ENCODE measurements at regions of chr6 and their contacts with region 1.

Region 1: GRCh38 chr6:33391278-33391921 is at the start of gene KIFC1:
- DNase-seq: peak; percentile 99
- H3K4me3 ChIP-seq: peak within 1 kb of the TSS; percentile 97
- CTCF ChIP-seq: peak; percentile 98

Region 2: GRCh38 chr6:33317669-33318425 is 73.6 kb before region 1 on chr6 and contains the start of gene ZBTB22:
- CTCF ChIA-PET with region 1: interaction called, 14 read pairs
- POLR2A ChIA-PET with region 1: no interaction called
- DNase-seq: peak; percentile 95
- H3K4me3 ChIP-seq: peak within 1 kb of the TSS; percentile 67
- CTCF ChIP-seq: no peak

Region 3: DNA sequence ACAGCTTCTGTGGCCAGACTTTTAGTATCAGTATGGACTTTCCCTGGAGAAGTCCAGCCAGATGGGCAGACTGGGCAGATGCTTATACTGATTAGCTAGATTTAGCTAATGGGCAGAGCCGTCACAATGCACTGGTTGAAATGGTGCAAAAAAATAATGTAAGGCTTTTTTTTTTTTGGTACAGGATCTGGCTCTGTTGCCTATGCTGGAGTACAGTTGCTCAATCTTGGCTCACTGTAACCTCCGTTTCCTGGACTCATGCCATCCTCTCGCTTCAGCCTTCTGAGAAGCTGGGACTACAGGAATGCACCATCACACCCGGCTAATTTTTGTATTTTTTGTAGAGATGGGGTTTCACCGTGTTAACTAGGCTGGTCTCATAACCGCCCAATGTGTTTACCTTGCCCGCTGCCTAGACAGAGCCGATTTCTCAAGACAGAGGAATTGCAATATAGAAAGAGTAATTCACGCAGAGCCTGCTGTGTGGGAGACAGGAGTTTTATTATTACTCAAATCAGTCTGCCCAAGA is 16.2 kb before region 1 on chr6:
- CTCF ChIA-PET with region 1: interaction called, 27 read pairs
- POLR2A ChIA-PET with region 1: no interaction called
- DNase-seq: peak; percentile 51
- H3K4me3 ChIP-seq: no peak overlapping the region
- CTCF ChIP-seq: no peak

Region 4: DNA sequence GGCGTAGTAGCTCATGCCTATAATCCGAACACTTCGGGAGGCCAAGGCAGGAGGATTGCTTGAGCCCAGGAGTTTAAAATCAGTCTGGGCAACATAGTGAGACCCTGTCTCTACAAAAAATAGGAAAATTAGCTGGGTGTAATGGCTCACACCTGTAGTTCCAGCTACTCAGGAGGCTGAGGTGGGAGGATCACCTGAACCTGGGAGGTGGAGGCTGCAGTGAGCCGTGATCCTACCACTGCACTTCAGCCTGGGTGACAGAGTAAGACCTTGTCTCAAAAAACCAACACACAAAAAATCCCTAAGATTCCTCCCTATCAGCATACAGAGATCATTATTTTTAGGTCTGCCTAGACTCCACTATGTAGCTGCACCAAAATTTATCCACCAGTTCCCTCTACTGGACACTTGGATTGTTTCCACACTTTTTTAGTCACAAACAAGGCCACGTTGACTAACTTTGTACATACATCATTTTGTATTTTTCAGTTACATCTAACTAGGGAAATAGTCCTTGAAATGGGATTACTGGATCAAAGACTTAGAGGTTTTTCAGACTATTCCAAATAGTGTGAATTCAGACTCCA is 15.8 kb after region 1 on chr6:
- CTCF ChIA-PET with region 1: interaction called, 44 read pairs
- POLR2A ChIA-PET with region 1: no interaction called
- DNase-seq: no peak
- H3K4me3 ChIP-seq: no peak overlapping the region
- CTCF ChIP-seq: no peak

Region 5: GRCh38 chr6:33417903-33418689 is 26.7 kb after region 1 on chr6 and contains the start of gene CUTA:
- CTCF ChIA-PET with region 1: interaction called, 11 read pairs
- POLR2A ChIA-PET with region 1: no interaction called
- DNase-seq: peak; percentile 98
- H3K4me3 ChIP-seq: peak within 1 kb of the TSS; percentile 91
- CTCF ChIP-seq: no peak

Region 6: DNA sequence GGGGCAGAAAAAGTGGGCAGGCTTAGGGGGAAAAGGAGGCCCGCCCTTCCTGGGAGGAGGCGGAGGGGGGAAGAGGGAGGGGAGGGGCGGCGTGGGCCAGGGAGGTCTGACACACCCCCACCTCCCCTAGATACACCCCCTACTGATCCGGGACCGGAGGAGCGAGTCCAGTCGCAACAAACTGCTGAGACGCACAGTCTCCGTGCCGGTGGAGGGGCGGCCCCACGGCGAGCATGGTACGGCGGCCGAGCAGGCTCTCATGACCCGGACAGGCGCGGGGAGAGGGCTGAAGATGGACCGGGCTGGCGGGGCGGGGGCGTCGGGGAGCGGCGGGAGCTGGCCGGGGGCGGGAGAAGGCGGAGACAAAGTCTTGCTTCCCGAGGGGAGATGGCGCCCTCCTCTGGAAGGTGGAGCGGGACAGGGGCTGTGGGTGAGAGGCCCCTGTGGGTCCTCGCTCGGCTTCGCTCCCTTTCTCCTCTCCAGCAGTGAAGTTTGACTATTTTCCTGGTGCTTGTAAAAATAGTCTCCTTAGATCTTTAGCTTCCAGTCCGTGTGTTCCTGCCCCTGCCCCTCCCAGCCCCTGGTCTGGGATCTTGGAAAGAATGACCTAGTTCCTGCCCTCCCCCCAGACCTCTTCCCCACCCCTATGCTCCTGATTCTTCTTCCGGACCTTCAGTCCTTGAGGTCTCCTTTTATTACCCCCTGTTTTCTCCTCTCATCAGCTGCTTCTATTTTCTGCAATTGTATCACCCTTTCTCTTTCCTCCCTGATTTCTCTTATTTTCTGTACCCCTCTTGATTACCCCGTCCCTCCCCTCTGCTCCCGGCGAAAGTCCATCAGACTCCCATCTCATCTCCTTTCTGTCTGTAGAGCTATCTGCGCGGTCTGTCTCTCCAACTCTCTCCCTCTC is 34.5 kb after region 1 on chr6:
- CTCF ChIA-PET with region 1: interaction called, 48 read pairs
- POLR2A ChIA-PET with region 1: no interaction called
- DNase-seq: no peak
- H3K4me3 ChIP-seq: peak overlapping the region; percentile 66
- CTCF ChIP-seq: peak; percentile 70

Region 7: GRCh38 chr6:33430991-33431879 is 39.8 kb after region 1 on chr6:
- CTCF ChIA-PET with region 1: interaction called, 48 read pairs
- POLR2A ChIA-PET with region 1: interaction called, 6 read pairs
- DNase-seq: no peak
- H3K4me3 ChIP-seq: no peak overlapping the region
- CTCF ChIP-seq: no peak

Region 8: DNA sequence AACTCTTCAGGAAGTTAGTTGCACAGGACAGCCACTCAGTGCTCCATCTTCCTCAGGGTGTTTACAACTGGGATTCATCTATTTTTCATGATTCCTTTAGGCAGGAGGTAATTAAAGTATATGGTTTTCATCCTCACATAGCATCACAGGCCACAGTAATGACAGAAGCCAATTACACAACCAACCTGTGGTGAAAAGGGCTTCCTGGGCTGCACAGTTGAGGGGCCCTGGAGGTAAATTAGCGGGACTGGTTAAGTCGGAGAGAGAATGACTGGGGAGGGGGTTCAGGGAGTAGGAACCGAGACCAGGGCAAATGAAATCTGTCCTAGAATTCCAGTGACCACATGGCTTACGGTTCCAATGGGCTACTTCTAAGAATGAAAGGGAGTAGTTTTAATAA is 151.7 kb after region 1 on chr6:
- CTCF ChIA-PET with region 1: no interaction called
- POLR2A ChIA-PET with region 1: no interaction called
- DNase-seq: no peak
- H3K4me3 ChIP-seq: no peak overlapping the region
- CTCF ChIP-seq: no peak

Region 9: DNA sequence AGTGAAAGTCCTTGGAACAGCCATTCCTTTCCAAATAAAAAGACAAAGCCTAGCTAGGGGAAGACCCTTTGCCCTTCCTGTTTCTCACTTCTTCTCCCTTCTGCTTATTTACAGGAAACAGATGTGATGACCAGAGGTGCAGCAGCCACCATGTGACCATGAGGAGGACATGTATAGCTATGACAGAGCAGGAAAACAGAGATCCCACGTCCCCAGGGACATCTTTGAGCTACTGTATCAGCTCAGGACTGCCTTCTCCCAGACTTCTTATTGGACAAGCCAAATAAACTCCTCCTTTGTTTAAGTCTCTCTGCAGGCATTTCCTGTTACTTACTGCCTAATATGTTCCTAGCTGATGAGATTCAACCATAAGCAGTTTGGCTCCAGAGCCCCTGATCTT is 545.5 kb after region 1 on chr6:
- CTCF ChIA-PET with region 1: no interaction called
- POLR2A ChIA-PET with region 1: no interaction called
- DNase-seq: no peak
- H3K4me3 ChIP-seq: no peak overlapping the region
- CTCF ChIP-seq: no peak

Measured in AG04449 (cell line).